ENCODE measurements at regions of chr19 and their contacts with region 1.

Region 1: DNA sequence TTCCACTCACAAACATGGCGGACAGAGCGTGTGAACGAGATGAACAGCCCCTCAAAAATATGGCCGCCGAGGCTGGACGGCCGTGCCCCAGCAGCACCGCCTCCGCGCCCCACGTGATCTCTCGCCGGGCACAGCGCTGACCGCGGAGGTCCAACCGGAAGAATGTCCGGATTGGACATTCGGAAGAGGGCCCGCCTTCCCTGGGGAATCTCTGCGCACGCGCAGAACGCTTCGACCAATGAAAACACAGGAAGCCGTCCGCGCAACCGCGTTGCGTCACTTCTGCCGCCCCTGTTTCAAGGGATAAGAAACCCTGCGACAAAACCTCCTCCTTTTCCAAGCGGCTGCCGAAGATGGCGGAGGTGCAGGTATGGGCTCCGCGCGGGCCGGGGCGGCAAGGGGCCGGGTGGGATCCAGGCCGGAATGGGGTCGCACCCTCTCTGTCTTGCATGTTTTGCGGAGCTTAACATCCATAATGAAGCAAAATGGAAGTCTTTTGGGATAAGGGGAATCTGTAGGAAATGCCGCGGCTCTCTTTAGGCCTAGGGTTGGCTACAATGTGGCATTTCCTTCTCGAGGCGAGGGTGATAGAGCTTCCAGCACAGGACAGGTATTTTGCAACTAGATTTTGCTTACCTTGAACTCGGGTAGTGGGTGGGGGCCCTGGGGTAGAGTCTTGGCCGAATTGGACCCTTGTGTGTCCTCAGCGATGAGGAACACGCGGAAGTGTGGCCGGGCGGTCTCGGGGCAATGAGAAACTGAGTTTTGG is at the start of gene RPL13A:
- H3K4me3 ChIP-seq: peak within 1 kb of the TSS; percentile 96
- H3K27ac ChIP-seq: peak within 1 kb of the TSS; percentile 95
- H3K4me1 ChIP-seq: peaks cover 4% of the 10 kb centered on the region; the same call in 1 of the 2 replicates
- CTCF ChIP-seq: no peak

Region 2: GRCh38 chr19:49430678-49431329 is 56.7 kb before region 1 on chr19:
- CTCF ChIA-PET with region 1: no interaction called
- POLR2A ChIA-PET with region 1: interaction called, 10 read pairs
- H3K4me3 ChIP-seq: no peak overlapping the region
- H3K27ac ChIP-seq: no peak overlapping the region
- H3K4me1 ChIP-seq: no peaks in the 10 kb centered on the region
- CTCF ChIP-seq: peak; percentile 76

Region 3: GRCh38 chr19:49473868-49474544 is 13.5 kb before region 1 on chr19 and contains the start of gene FLT3LG:
- CTCF ChIA-PET with region 1: interaction called, 17 read pairs
- POLR2A ChIA-PET with region 1: interaction called, 5 read pairs
- H3K4me3 ChIP-seq: peak within 1 kb of the TSS; percentile 59
- H3K27ac ChIP-seq: peak within 1 kb of the TSS; percentile 5; the same call in 1 of the 2 replicates
- H3K4me1 ChIP-seq: 0 out of 2 replicates have a peak, but pooled peaks cover 2% of the 10 kb centered on the region
- CTCF ChIP-seq: peak; percentile 97

Region 4: GRCh38 chr19:49528211-49528771 is 40.8 kb after region 1 on chr19:
- CTCF ChIA-PET with region 1: no interaction called
- POLR2A ChIA-PET with region 1: no interaction called
- H3K4me3 ChIP-seq: no peak overlapping the region
- H3K27ac ChIP-seq: no peak overlapping the region
- H3K4me1 ChIP-seq: no peaks in the 10 kb centered on the region
- CTCF ChIP-seq: no peak